Transverse colon (tissue), 4 donors: ENCODE measurements at regions of chr6 and their contacts with region 1.

Region 1: GRCh38 chr6:129015721-129016120 is 132.8 kb downstream of the LAMA2 start:
- DNase-seq: no peak
- H3K4me3 ChIP-seq: no peak overlapping the region
- H3K27ac ChIP-seq: no peak overlapping the region
- H3K4me1 ChIP-seq: no peaks in the 10 kb centered on the region
- H3K27me3 ChIP-seq: no peaks in the 10 kb centered on the region
- CTCF ChIP-seq: no peak
- EP300 ChIP-seq: no peak
- POLR2A ChIP-seq: no peak

Region 2: GRCh38 chr6:129031051-129031599 is 15.4 kb after region 1 on chr6:
- in situ Hi-C with region 1: no loop called
- intact Hi-C with region 1: loop called (anchors 1 kb)
- DNase-seq: no peak
- H3K4me3 ChIP-seq: no peak overlapping the region
- H3K27ac ChIP-seq: no peak overlapping the region
- H3K4me1 ChIP-seq: no peaks in the 10 kb centered on the region
- H3K27me3 ChIP-seq: no peaks in the 10 kb centered on the region
- CTCF ChIP-seq: no peak
- EP300 ChIP-seq: no peak
- POLR2A ChIP-seq: no peak